ENCODE measurements at regions of chr20 and their contacts with region 1.

Region 1: GRCh38 chr20:24160563-24161375 is 172.2 kb upstream of the GGTLC1 start:
- DNase-seq: peak; percentile 66
- ATAC-seq: peak; percentile 94
- H3K4me3 Mint-ChIP-seq: no peak overlapping the region
- H3K27ac Mint-ChIP-seq: no peak overlapping the region
- H3K4me1 Mint-ChIP-seq: peaks cover 16% of the 10 kb centered on the region
- H3K27me3 Mint-ChIP-seq: peaks cover 3% of the 10 kb centered on the region; the same call in 1 of the 2 replicates
- CTCF ChIP-seq: peak; percentile 40; the same call in 1 of the 2 replicates

Region 2: DNA sequence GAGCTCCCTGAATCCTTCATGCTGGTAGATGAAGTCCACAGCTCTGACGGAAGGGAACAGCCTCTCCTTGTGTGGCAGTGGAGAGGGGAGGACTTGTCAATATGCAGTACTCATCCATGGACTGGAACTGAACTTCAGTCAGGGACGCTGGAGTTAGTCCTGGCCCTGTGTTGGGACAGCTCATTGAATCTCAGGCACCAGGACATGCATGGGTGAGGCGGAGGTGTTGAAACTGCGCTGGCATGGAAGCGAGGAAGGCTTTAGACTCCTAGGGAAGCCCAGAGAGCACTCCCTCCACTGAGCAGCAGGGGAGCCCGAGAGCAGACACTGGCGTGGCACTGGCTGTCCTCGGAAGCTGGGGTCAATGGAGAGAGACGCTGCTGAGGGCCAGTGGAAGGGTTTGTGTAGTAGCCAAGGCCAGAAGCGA is 10.9 kb before region 1 on chr20:
- CTCF ChIA-PET with region 1: interaction called, 10 read pairs
- POLR2A ChIA-PET with region 1: no interaction called
- DNase-seq: peak; percentile 73
- ATAC-seq: peak; percentile 97
- H3K4me3 Mint-ChIP-seq: no peak overlapping the region
- H3K27ac Mint-ChIP-seq: no peak overlapping the region
- H3K4me1 Mint-ChIP-seq: peaks cover 9% of the 10 kb centered on the region
- H3K27me3 Mint-ChIP-seq: peaks cover 4% of the 10 kb centered on the region; the same call in 1 of the 2 replicates
- CTCF ChIP-seq: peak; percentile 59; the same call in 1 of the 2 replicates

Region 3: GRCh38 chr20:24208614-24209013 is 47.8 kb after region 1 on chr20:
- CTCF ChIA-PET with region 1: interaction called, 11 read pairs
- POLR2A ChIA-PET with region 1: no interaction called
- DNase-seq: peak; percentile 67
- ATAC-seq: peak; percentile 86
- H3K4me3 Mint-ChIP-seq: no peak overlapping the region
- H3K27ac Mint-ChIP-seq: no peak overlapping the region
- H3K4me1 Mint-ChIP-seq: peaks cover 28% of the 10 kb centered on the region
- H3K27me3 Mint-ChIP-seq: peaks cover 3% of the 10 kb centered on the region
- CTCF ChIP-seq: 0 out of 2 replicates have a peak, but pooled peaks have one; percentile 16